ENCODE measurements at regions of chr4 and their contacts with region 1.

Region 1: GRCh38 chr4:109702950-109703663 is at the start of gene CASP6:
- DNase-seq: peak; percentile 73
- H3K4me3 Mint-ChIP-seq: peak within 1 kb of the TSS; percentile 85
- H3K27ac Mint-ChIP-seq: peak within 1 kb of the TSS; percentile 85
- H3K4me1 Mint-ChIP-seq: peaks cover 35% of the 10 kb centered on the region
- H3K27me3 Mint-ChIP-seq: no peaks in the 10 kb centered on the region
- total RNA-seq, gene CASP6: 26.7 and 31.8 TPM in 2 replicates

Region 2: DNA sequence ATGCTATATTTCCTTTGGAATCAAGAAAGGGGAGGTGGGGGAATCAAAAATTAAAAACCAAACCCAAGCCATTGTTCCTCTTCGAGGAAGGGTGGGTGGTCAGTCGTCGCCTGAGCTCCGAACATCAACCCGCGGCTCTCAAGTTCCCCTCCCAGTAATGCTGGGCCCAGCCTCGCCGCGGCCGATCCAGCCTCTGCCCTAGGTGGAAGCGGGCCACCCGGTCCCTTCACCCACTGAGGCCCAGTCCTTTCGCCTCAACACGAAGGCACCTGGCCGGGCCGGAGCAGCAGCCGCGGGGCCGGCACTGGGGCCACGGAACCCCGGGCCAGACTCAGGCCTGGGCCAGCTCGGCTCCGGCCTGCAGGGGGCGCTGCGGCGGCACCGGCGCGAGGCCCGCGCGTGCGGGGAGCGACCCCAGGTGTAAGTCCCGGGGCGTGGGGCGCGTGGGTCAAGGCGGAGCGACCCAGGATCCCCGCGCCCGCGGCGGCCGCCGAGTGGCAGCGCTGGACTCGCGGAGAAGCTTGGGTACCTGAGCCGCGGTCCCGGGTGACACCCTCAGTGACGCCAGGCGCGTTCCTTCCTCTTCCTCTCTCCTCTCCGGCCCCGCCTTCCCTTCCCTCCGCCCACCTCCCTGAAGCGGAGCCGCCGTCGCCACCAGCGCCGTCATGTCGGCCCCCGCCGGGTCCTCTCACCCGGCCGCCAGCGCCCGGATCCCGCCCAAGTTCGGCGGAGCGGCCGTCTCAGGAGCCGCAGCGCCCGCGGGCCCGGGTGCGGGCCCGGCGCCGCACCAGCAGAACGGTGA is 269.7 kb before region 1 on chr4 and contains the start of gene SEC24B:
- intact Hi-C with region 1: loop called (anchors 1 kb)
- DNase-seq: peak; percentile 86
- H3K4me3 Mint-ChIP-seq: peak within 1 kb of the TSS; percentile 84
- H3K27ac Mint-ChIP-seq: peak within 1 kb of the TSS; percentile 71
- H3K4me1 Mint-ChIP-seq: peaks cover 51% of the 10 kb centered on the region
- H3K27me3 Mint-ChIP-seq: no peaks in the 10 kb centered on the region
- total RNA-seq, gene SEC24B: 32.0 and 32.3 TPM in 2 replicates

Region 3: GRCh38 chr4:109574102-109574850 is 128.8 kb before region 1 on chr4:
- intact Hi-C with region 1: no loop called
- DNase-seq: no peak
- H3K4me3 Mint-ChIP-seq: peak overlapping the region; percentile 11
- H3K27ac Mint-ChIP-seq: no peak overlapping the region
- H3K4me1 Mint-ChIP-seq: peaks cover 39% of the 10 kb centered on the region
- H3K27me3 Mint-ChIP-seq: peaks cover 6% of the 10 kb centered on the region

Region 4: GRCh38 chr4:109690690-109691410 is 12.3 kb before region 1 on chr4:
- intact Hi-C with region 1: loop called (anchors 1 kb)
- DNase-seq: no peak
- H3K4me3 Mint-ChIP-seq: peak overlapping the region; percentile 5
- H3K27ac Mint-ChIP-seq: peak overlapping the region; percentile 29
- H3K4me1 Mint-ChIP-seq: peaks cover 20% of the 10 kb centered on the region
- H3K27me3 Mint-ChIP-seq: no peaks in the 10 kb centered on the region

Region 5: DNA sequence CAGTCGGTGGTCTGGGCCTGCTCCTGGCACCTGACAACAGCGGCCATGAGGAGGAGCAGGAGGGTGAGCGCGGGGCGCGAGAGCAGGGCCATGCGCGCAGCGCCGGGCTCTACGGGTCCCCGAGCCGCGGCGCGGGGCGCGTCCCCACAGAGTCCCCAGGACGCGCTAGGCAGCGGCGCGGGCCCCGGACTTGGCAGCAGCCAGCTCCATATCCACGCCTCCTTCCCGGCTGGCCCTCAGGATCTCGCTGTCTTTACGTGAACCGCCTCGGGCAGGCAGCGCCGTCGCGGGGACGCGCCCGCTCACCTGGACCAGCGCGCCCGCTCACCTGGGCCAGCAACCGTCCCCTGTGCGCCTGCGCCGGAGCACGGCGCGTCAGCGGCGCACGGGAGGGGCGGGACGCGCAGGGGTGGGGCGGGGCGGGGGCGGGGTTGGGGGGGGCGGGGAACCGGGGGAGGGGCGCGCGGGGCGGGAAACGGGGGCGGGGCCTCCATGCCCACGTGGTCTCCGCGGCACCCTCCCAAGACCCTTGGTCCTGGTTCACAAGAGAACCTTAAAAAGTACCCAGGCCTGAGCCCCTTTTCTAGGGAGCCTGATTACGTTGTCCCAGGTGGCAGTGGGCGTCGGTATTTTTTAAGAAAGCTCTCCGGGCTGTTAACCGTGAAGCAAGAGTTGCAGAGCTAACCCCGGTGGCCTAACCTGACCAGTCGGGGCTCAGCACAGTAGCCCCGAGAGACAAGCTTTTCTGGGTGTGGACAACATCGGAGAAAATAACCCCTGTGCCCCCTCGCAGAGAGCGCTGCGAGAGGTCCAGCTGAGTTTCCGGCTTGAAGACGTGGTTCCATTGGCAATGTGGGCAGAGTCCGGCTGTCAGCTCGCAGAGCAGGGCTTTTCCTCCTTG is 26.9 kb after region 1 on chr4 and contains the start of gene PLA2G12A:
- intact Hi-C with region 1: loop called (anchors 1 kb)
- DNase-seq: peak; percentile 68
- H3K4me3 Mint-ChIP-seq: peak within 1 kb of the TSS; percentile 82
- H3K27ac Mint-ChIP-seq: no peak within 1 kb of the TSS
- H3K4me1 Mint-ChIP-seq: peaks cover 14% of the 10 kb centered on the region
- H3K27me3 Mint-ChIP-seq: no peaks in the 10 kb centered on the region
- total RNA-seq, gene PLA2G12A: 7.9 and 10.4 TPM in 2 replicates

Region 6: GRCh38 chr4:109977854-109978501 is 274.9 kb after region 1 on chr4:
- intact Hi-C with region 1: loop called (anchors 5 kb)
- DNase-seq: no peak
- H3K4me3 Mint-ChIP-seq: no peak overlapping the region
- H3K27ac Mint-ChIP-seq: no peak overlapping the region
- H3K4me1 Mint-ChIP-seq: peaks cover 5% of the 10 kb centered on the region
- H3K27me3 Mint-ChIP-seq: peaks cover 38% of the 10 kb centered on the region

Measured in activated T-helper 2 cell treated with anti-CD3 and anti-CD28 coated beads, Interferon-gamma antibody, Interleukin-2, Interleukin-4, amounts not matched to agents 10 μg/mL and 5 μg/mL and 100 μg/mL, durations not matched to agents 14 hours and 24 hours and 36 hours (primary cell).